AG04450 (cell line): ENCODE measurements at regions of chr6 and their contacts with region 1.

Region 1: GRCh38 chr6:107459283-107460082 is at the start of gene PDSS2:
- DNase-seq: peak; percentile 87
- H3K4me3 ChIP-seq: peak within 1 kb of the TSS; percentile 93
- H3K27ac ChIP-seq: peak within 1 kb of the TSS; percentile 80
- H3K27me3 ChIP-seq: no peaks in the 10 kb centered on the region
- CTCF ChIP-seq: peak; percentile 67
- polyA plus RNA-seq, gene PDSS2: 17.0 and 19.1 TPM in 2 replicates

Region 2: DNA sequence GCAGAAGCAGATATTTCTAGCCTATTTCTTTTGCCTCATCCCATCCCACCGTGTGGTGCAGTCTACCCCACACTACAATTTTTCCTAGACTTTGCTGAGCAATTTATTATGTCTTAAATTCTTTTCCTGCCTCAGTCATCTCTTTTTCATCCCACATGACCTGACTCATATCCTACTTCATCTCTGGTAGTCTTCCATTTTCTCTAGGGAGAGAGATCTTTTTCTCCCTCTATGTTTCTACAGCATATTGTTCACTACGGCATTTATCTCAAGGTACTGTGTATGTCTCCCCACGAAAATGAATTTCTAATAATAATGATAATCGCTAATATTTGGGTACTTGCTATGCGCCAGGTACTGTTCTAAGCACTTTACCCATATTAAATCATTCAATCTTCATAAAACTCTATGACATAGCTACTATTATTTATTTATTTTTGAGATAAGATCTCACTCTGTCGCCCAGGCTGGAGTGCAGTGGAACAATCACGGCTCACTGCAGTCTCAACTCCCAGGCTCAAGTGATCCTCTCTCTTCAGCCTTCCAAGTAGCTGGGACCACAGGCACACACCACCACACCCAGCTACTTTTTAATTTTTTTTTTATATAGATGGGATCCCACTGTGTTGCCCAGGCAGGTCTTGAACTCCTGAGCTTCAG is 15.7 kb before region 1 on chr6:
- CTCF ChIA-PET with region 1: interaction called, 11 read pairs
- POLR2A ChIA-PET with region 1: interaction called, 4 read pairs
- DNase-seq: no peak
- H3K4me3 ChIP-seq: no peak overlapping the region
- H3K27ac ChIP-seq: no peak overlapping the region
- H3K27me3 ChIP-seq: no peaks in the 10 kb centered on the region
- CTCF ChIP-seq: no peak

Region 3: GRCh38 chr6:107479089-107479690 is 19.7 kb after region 1 on chr6:
- CTCF ChIA-PET with region 1: no interaction called
- POLR2A ChIA-PET with region 1: no interaction called
- DNase-seq: no peak
- H3K4me3 ChIP-seq: no peak overlapping the region
- H3K27ac ChIP-seq: no peak overlapping the region
- H3K27me3 ChIP-seq: peaks cover 20% of the 10 kb centered on the region
- CTCF ChIP-seq: no peak

Region 4: GRCh38 chr6:107489636-107490565 is 30.4 kb after region 1 on chr6 and contains the start of gene SOBP:
- CTCF ChIA-PET with region 1: interaction called, 5 read pairs
- POLR2A ChIA-PET with region 1: interaction called, 10 read pairs
- DNase-seq: no peak
- H3K4me3 ChIP-seq: peak within 1 kb of the TSS; percentile 76
- H3K27ac ChIP-seq: no peak within 1 kb of the TSS
- H3K27me3 ChIP-seq: peaks cover 19% of the 10 kb centered on the region
- CTCF ChIP-seq: no peak
- polyA plus RNA-seq, gene SOBP: 0.76 and 1.1 TPM in 2 replicates

Region 5: GRCh38 chr6:107648983-107649382 is 189.5 kb after region 1 on chr6:
- CTCF ChIA-PET with region 1: no interaction called
- POLR2A ChIA-PET with region 1: interaction called, 10 read pairs
- DNase-seq: no peak
- H3K4me3 ChIP-seq: no peak overlapping the region
- H3K27ac ChIP-seq: no peak overlapping the region
- H3K27me3 ChIP-seq: no peaks in the 10 kb centered on the region
- CTCF ChIP-seq: no peak